Activated CD4-positive, alpha-beta T cell treated with anti-CD3 and anti-CD28 coated beads for 36 hours (primary cell): ENCODE measurements at regions of chr3 and their contacts with region 1.

Region 1: GRCh38 chr3:107574650-107575049 is 51.9 kb downstream of the BBX start:
- DNase-seq: no peak
- ATAC-seq: no peak
- H3K4me3 Mint-ChIP-seq: no peak overlapping the region
- H3K27ac Mint-ChIP-seq: no peak overlapping the region
- H3K4me1 Mint-ChIP-seq: peaks cover 26% of the 10 kb centered on the region
- H3K27me3 Mint-ChIP-seq: no peaks in the 10 kb centered on the region

Region 2: DNA sequence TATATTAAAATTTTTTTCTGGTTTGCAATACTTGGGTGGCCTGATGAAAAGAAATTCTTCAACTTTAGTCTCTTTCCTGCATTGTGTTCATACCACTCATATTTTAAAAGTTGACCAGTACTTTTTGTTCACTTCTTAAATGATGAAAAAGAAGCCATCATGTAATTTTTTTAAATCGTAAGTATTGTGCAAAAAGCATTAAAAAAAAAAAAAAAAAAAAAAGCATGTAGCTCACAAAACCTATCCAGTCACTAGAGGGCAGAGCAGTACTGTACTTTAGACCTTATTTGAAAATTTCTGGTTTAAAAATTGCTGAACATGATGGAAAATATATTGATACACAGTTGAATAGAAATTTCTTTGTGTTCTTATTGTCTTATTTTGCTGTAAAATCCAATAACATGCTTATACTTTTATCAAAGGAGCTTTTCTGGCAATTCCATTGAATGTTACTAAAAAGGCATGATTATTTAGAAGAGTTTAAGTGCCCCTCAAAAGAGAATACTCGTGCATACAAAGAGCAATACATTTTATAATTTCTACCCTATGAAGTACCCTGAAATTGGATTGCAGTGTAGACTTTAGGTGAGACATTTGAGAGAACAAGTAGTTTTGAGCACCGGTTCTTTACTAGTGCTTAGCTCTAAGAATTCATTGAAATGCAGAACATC is 85.8 kb after region 1 on chr3:
- CTCF ChIA-PET with region 1: interaction called, 7 read pairs
- POLR2A ChIA-PET with region 1: no interaction called
- intact Hi-C with region 1: loop called (anchors 2 to 5 kb)
- DNase-seq: no peak
- ATAC-seq: no peak
- H3K4me3 Mint-ChIP-seq: no peak overlapping the region
- H3K27ac Mint-ChIP-seq: no peak overlapping the region
- H3K4me1 Mint-ChIP-seq: peaks cover 26% of the 10 kb centered on the region
- H3K27me3 Mint-ChIP-seq: no peaks in the 10 kb centered on the region

Region 3: DNA sequence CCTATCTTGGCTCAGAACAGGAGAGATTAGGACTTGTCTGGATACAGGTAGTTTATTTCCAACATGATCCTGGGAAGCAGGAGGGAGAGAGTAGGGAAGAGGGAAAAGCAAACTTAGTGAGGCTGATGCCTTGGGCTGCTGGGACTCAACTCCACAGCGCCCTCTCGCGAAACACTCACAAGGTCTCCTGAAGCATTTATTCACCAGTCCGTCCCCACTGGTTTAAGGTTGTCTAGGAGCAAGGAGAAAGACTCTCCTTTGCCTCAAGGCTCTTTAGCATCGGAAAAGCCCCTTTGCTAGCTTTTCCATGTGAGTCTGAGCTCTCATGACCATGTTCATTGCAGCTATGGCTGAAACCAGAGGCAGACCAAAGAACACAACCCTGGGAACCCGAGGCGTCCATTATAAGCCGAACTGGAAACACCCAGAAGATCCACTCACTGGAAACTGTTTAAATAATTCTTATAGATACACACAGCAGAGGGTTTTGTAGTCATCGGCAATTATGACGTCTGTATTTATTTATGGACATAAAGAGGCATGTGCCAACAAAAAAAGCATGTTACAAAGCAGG is 271.7 kb after region 1 on chr3:
- CTCF ChIA-PET with region 1: no interaction called
- POLR2A ChIA-PET with region 1: no interaction called
- intact Hi-C with region 1: loop called in 1 of 2 experiments (anchors 2 kb)
- DNase-seq: peak; percentile 70
- ATAC-seq: no peak
- H3K4me3 Mint-ChIP-seq: no peak overlapping the region
- H3K27ac Mint-ChIP-seq: no peak overlapping the region
- H3K4me1 Mint-ChIP-seq: peaks cover 2% of the 10 kb centered on the region
- H3K27me3 Mint-ChIP-seq: peaks cover 2% of the 10 kb centered on the region